ENCODE measurements at regions of chr17 and their contacts with region 1.

Region 1: GRCh38 chr17:7296189-7296902 is 1.9 kb upstream of the YBX2 start:
- DNase-seq: no peak
- H3K4me3 ChIP-seq: peak overlapping the region; percentile 16; the same call in 1 of the 2 replicates
- H3K27me3 ChIP-seq: peaks cover 21% of the 10 kb centered on the region
- CTCF ChIP-seq: peak; percentile 75

Region 2: GRCh38 chr17:7001318-7001961 is 294.9 kb before region 1 on chr17:
- CTCF ChIA-PET with region 1: no interaction called
- POLR2A ChIA-PET with region 1: no interaction called
- DNase-seq: no peak
- H3K4me3 ChIP-seq: no peak overlapping the region
- H3K27me3 ChIP-seq: no peaks in the 10 kb centered on the region
- CTCF ChIP-seq: peak; percentile 64

Region 3: GRCh38 chr17:7214300-7215135 is 81.8 kb before region 1 on chr17:
- CTCF ChIA-PET with region 1: interaction called, 50 read pairs
- POLR2A ChIA-PET with region 1: no interaction called
- DNase-seq: peak; percentile 71
- H3K4me3 ChIP-seq: peak overlapping the region; percentile 38
- H3K27me3 ChIP-seq: no peaks in the 10 kb centered on the region
- CTCF ChIP-seq: peak; percentile 71

Region 4: DNA sequence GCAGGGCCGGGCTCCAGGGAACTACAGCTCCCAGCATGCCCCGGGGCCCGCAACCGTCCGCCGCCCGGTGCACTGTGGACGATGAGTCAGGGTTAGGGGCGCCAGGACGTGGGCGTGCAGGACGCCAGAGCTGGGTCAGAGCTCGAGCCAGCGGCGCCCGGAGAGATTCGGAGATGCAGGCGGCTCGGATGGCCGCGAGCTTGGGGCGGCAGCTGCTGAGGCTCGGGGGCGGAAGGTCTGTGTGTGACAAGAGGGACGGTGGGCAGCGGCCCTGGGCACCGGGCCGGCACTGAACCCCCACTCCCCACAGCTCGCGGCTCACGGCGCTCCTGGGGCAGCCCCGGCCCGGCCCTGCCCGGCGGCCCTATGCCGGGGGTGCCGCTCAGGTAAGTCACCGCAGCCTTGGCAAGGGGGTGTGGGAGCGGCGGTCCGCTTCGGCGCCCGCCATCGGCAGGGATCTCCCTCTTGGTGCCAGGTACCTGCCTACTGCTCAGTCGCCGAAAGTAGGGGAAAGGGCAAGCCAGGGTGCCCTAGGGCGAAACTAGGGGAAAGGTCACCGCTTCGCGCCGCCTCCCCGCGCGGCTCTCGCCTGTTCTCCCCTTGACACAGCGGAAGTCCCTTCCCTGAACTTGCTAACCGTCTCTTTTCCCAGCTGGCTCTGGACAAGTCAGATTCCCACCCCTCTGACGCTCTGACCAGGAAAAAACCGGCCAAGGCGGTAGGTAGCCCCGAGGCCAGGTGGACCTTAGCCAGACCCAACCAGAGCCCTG is 76.3 kb before region 1 on chr17 and contains the starts of genes ACADVL and DLG4:
- CTCF ChIA-PET with region 1: interaction called, 50 read pairs
- POLR2A ChIA-PET with region 1: no interaction called
- DNase-seq: peak; percentile 37
- H3K4me3 ChIP-seq: peak within 1 kb of the TSS; percentile 84
- H3K27me3 ChIP-seq: no peaks in the 10 kb centered on the region
- CTCF ChIP-seq: no peak
- polyA plus RNA-seq, gene ACADVL: 335 and 517 TPM in 2 replicates
- polyA plus RNA-seq, gene DLG4: 13.3 and 20.4 TPM in 2 replicates

Region 5: GRCh38 chr17:7239091-7240027 is 57.0 kb before region 1 on chr17 and contains the start of gene PHF23:
- CTCF ChIA-PET with region 1: interaction called, 19 read pairs
- POLR2A ChIA-PET with region 1: no interaction called
- DNase-seq: peak; percentile 98
- H3K4me3 ChIP-seq: peak within 1 kb of the TSS; percentile 97
- H3K27me3 ChIP-seq: no peaks in the 10 kb centered on the region
- CTCF ChIP-seq: no peak
- polyA plus RNA-seq, gene PHF23: 59.0 and 72.8 TPM in 2 replicates

Region 6: GRCh38 chr17:7280519-7281429 is 15.6 kb before region 1 on chr17:
- CTCF ChIA-PET with region 1: interaction called, 51 read pairs
- POLR2A ChIA-PET with region 1: no interaction called
- DNase-seq: no peak
- H3K4me3 ChIP-seq: peak overlapping the region; percentile 48
- H3K27me3 ChIP-seq: peaks cover 6% of the 10 kb centered on the region
- CTCF ChIP-seq: peak; percentile 82

Region 7: DNA sequence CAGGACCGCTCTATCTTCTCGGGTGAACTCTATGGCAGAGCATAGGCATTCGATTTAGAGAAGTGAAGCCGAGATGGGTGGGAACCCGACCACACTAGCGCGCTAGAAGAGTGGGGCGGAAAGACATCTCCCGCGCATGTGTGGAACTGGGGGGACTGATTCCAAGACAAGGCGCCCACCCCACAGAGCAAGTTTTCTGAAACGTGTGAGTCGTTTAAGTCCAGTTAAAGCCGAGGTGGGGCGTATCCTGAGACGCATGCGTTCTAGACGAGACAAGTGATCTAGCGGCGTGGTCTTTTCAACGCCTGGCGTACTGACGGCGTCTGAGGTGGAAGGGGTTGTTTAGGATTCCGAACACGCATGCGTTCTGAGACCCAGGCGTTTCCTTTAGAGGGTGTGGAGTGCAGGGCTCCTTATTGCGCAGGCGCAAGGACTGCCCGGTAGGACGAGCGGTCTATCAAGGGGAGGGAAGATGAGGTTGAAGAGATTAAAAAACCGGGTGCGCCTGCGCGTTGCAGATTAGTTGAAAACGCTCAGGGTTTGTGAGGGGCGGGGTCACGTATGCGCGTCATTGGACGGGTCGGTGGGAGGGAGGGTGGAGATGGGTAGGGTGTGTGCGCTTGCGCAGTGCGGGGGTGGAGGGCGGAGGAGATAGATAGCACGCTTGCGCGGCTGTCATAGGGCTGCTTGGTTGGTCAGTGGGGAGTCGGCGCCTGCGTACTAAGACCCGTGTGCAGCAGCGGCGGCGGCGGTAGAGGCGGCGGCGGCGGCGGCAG is 10.8 kb after region 1 on chr17 and contains the start of gene EIF5A:
- CTCF ChIA-PET with region 1: interaction called, 15 read pairs
- POLR2A ChIA-PET with region 1: no interaction called
- DNase-seq: peak; percentile 100
- H3K4me3 ChIP-seq: peak within 1 kb of the TSS; percentile 71
- H3K27me3 ChIP-seq: no peaks in the 10 kb centered on the region; the same call in 1 of the 2 replicates
- CTCF ChIP-seq: no peak
- polyA plus RNA-seq, gene EIF5A: 556 and 579 TPM in 2 replicates

Region 8: GRCh38 chr17:7383742-7384488 is 87.6 kb after region 1 on chr17:
- CTCF ChIA-PET with region 1: no interaction called
- POLR2A ChIA-PET with region 1: no interaction called
- DNase-seq: no peak
- H3K4me3 ChIP-seq: peak overlapping the region; percentile 34
- H3K27me3 ChIP-seq: peaks cover 8% of the 10 kb centered on the region
- CTCF ChIP-seq: no peak

Region 9: DNA sequence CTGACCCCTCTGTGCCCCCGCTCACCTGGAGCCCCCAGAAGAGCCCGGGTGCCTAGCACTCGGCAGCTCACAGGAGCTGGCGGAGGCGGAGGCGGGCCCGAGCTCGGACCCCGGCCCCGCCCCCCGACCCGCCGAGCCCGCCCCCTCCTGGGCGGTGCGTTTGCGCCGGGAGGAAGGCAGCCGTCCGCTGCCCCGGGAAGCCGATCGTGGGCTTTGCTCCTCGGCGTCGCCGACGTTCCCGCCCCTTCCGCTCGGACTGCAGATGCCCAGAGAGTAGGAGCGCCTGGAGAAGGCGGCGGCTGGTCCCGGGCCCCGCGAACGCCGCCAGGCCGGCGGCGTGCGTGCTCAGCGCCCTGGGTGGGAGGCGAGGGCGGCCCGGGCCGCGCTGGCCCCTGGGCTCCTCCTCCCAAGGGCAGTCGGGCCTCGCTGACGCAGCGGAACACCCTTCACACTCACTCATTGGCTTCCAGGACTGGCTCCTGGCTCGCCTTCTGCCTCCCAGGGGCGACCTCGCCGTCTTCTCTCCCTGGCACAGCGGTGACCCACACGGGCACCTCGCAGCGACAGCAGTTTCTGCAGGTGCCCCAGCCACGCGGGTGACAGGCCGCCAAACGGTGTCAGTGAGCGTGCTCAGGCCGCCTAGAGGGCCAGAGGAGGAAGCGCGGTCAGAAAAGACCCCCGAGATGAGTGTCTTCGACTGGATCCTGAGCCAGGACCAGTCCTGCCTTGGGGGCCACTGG is 98.3 kb after region 1 on chr17 and contains the start of gene PLSCR3:
- CTCF ChIA-PET with region 1: no interaction called
- POLR2A ChIA-PET with region 1: no interaction called
- DNase-seq: peak; percentile 45
- H3K4me3 ChIP-seq: peak within 1 kb of the TSS; percentile 89
- H3K27me3 ChIP-seq: no peaks in the 10 kb centered on the region
- CTCF ChIP-seq: peak; percentile 64
- polyA plus RNA-seq, gene PLSCR3: 40.1 and 76.1 TPM in 2 replicates